HepG2 (cell line): ENCODE measurements at regions of chr16 and their contacts with region 1.

Region 1: GRCh38 chr16:30557957-30558788 is at the start of gene ZNF764:
- DNase-seq: peak; percentile 99
- ATAC-seq: peak; percentile 95
- H3K4me3 ChIP-seq: peak within 1 kb of the TSS; percentile 73 to 82 (median 82)
- H3K27ac ChIP-seq: peak within 1 kb of the TSS; percentile 95
- H3K4me1 ChIP-seq: peaks cover 40% of the 10 kb centered on the region
- H3K27me3 ChIP-seq: no peaks in the 10 kb centered on the region
- CTCF ChIP-seq: no peak; the same call in none of the 2 replicates
- EP300 ChIP-seq: peak in 1 of 2 experiments; percentile 38; a peak in 2 of 4 replicates
- POLR2A ChIP-seq: peak; percentile 80 to 90
- RAD21 ChIP-seq: peak; percentile 47
- total RNA-seq, gene ZNF764: 7.3 and 9.1 TPM in 2 replicates

Region 2: DNA sequence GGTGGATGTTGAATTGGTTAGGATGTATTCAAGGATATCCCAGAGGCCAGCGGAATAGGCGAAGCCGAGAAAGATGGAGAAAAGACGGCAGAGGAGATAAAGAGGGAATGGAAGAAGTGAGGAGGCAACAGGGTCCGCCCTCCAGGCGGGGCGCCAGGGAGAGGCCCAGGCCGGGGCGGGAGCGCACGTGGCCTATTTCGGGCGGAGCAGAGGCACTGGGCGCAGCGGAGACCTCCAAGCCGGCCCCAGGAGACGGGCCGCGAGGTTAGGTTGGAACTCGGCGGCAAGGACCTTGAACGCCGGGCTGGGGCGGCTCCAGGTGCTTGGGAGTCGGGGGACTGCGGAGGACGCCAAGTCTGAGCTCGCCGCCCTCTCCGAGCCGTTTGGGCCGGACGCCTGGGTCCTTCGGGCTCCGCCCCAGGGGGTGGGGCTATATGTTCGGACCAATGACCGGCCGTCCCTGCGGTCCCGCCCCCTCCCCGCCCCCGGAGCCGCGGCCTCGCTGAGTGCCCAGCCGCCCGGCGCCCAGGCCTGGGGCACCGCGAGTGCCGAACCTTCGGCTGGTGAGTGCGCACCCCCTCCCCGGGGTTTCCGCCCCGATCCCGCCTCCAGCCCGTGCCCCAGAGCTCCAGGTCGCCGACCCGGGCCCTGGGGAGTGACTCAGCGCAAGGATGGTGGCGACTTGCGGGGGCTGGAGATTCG is 150.9 kb before region 1 on chr16 and contains the start of gene ZNF771:
- CTCF ChIA-PET with region 1: no interaction called
- POLR2A ChIA-PET with region 1: interaction called, 11 read pairs
- in situ Hi-C with region 1: no loop called
- intact Hi-C with region 1: no loop called
- DNase-seq: peak; percentile 84
- ATAC-seq: peak; percentile 88
- H3K4me3 ChIP-seq: peak within 1 kb of the TSS; percentile 87 to 96 (median 91)
- H3K27ac ChIP-seq: peak within 1 kb of the TSS; percentile 85
- H3K4me1 ChIP-seq: peaks cover 39% of the 10 kb centered on the region
- H3K27me3 ChIP-seq: no peaks in the 10 kb centered on the region
- CTCF ChIP-seq: peak; percentile 54
- EP300 ChIP-seq: no peak
- POLR2A ChIP-seq: peak; percentile 91 to 92
- RAD21 ChIP-seq: peak; percentile 75
- total RNA-seq, gene ZNF771: 10.9 and 11.8 TPM in 2 replicates

Region 3: DNA sequence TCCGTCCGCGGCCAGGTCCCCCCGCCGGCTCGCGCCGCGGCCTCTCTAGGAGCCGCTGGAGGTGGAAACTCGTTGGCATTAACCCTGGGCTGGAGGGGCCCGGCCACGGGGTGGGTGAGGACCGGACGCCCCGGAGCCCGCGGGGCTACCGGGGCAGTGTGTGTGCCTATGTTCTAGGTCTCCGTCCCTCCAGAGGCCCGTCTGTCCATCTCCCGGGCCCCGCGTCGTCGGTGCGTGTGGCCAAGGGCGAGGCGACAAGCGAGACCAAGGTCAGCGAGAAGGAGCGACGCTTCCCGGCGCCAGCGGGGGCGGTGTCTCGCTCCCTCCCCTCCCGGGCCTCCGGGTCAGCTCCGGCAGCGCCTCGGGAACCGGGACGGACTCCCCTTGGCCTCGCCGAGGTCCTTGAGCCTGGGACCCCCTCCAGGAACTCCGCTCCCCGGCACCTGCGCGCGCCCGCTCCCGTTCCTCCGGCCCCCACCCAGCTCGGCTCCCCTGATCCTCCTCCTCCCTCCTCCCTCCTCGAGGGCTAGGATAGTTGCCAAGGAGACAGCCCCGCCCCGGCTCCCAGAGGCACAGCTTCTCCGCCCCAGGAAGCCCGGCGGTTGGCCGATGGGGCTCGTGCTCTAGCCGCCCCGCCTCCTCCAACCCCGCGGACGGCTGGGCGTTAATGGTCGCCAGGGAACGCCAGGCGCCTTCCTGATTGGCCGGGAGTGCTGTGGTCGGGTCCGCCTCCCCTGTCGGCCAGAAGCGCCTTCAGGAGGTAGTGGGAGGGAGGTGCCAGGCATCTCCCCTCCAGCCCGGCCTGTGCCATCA is 31.1 kb before region 1 on chr16:
- CTCF ChIA-PET with region 1: no interaction called
- POLR2A ChIA-PET with region 1: interaction called, 28 read pairs
- in situ Hi-C with region 1: no loop called
- intact Hi-C with region 1: loop called (anchors 2 kb)
- DNase-seq: peak; percentile 97
- ATAC-seq: peak; percentile 89
- H3K4me3 ChIP-seq: peak overlapping the region; percentile 78 to 97 (median 87)
- H3K27ac ChIP-seq: peak overlapping the region; percentile 98
- H3K4me1 ChIP-seq: peaks cover 61% of the 10 kb centered on the region
- H3K27me3 ChIP-seq: no peaks in the 10 kb centered on the region; a peak in 1 of 5 replicates
- CTCF ChIP-seq: peak; percentile 54
- EP300 ChIP-seq: peak in 1 of 2 experiments; percentile 31; a peak in 1 of 4 replicates
- POLR2A ChIP-seq: peak; percentile 70 to 76
- RAD21 ChIP-seq: peak; percentile 75

Region 4: DNA sequence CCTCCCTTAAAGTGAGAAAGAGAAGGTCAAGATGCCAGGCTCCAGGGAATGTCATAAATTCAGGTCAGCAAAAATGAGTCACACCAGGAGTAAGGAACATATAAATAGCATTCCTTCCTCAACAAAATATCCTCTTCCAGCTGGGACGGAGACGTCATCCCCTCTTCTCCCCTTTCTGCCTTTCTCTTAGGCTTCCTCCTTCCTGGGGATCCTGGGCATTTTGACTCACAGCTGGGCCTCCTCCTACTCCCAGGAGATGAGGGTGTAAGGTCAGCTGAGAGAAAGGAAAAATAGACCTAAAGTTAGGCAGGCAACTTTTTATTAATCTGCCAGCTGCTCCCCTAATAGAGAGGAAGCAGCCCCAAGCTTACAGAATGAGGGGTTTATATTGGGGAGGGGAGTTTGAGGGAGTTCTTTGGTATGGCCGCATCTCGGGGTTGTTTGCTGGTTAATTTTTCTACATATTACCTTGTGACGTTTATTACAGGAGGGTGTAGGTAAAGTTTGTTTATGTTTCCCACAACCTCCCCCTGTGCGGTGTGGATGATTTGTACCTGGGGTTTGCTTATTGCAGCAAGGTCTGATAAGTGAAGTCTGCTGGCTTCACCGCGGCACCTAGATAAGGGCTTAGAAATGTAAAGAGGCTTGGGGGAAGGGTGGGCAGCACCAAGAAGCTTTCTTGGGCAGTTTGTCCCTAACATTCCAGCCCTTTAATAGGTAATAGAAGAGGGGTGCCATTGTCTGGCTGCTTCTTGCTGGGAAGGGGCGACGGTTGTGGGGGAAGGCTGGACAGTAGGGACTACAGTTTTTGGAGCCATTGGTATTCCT is 16.5 kb before region 1 on chr16:
- CTCF ChIA-PET with region 1: no interaction called
- POLR2A ChIA-PET with region 1: interaction called, 187 read pairs
- in situ Hi-C with region 1: no loop called
- intact Hi-C with region 1: no loop called
- DNase-seq: peak; percentile 47
- ATAC-seq: peak; percentile 43
- H3K4me3 ChIP-seq: peak overlapping the region; percentile 48 to 63 (median 58)
- H3K27ac ChIP-seq: peak overlapping the region; percentile 62
- H3K4me1 ChIP-seq: peaks cover 72% of the 10 kb centered on the region
- H3K27me3 ChIP-seq: no peaks in the 10 kb centered on the region
- CTCF ChIP-seq: no peak
- EP300 ChIP-seq: no peak; a peak in 1 of 4 replicates
- POLR2A ChIP-seq: 0 out of 4 replicates have a peak, but pooled peaks of 1 of the 2 experiments have one; percentile 15
- RAD21 ChIP-seq: no peak

Region 5: DNA sequence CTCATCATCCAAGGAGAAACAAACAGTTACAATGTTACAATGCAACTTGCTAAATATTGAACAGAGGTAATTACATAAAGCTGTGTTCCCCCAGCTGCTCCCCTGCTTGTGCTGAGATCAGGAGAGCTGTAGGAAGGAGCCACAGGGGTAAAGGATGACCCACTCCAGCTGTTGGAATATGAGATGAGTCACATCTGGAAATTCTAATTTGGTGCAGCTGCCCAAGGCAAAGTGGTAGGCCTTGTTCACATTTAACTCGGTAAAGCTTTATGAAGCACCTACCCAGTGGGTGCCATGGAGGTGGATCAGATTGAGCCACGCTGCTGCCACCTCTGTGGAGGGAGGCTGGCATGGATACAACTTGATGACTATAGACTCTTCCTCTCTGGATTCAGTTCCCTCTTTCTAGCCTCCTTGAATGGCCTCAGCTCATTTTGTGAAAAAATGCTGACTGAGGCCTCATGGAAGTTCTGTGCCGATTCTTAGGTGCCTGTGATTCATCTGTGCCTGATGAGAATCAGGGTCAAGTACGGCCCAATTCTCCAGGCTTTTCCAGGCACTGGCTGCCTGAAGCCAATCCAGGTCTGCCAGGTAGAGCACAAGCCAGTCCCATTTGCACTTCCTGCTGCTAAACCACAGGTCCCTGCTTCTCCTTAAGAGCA is 44.6 kb after region 1 on chr16:
- CTCF ChIA-PET with region 1: interaction called, 4 read pairs
- POLR2A ChIA-PET with region 1: interaction called, 7 read pairs
- in situ Hi-C with region 1: no loop called
- intact Hi-C with region 1: loop called (anchors 5 kb)
- DNase-seq: no peak
- ATAC-seq: no peak
- H3K4me3 ChIP-seq: no peak overlapping the region
- H3K27ac ChIP-seq: no peak overlapping the region
- H3K4me1 ChIP-seq: peaks cover 27% of the 10 kb centered on the region
- H3K27me3 ChIP-seq: no peaks in the 10 kb centered on the region
- CTCF ChIP-seq: no peak
- EP300 ChIP-seq: no peak
- POLR2A ChIP-seq: 0 out of 4 replicates have a peak, but pooled peaks of 1 of the 2 experiments have one; percentile 29
- RAD21 ChIP-seq: no peak

Region 6: DNA sequence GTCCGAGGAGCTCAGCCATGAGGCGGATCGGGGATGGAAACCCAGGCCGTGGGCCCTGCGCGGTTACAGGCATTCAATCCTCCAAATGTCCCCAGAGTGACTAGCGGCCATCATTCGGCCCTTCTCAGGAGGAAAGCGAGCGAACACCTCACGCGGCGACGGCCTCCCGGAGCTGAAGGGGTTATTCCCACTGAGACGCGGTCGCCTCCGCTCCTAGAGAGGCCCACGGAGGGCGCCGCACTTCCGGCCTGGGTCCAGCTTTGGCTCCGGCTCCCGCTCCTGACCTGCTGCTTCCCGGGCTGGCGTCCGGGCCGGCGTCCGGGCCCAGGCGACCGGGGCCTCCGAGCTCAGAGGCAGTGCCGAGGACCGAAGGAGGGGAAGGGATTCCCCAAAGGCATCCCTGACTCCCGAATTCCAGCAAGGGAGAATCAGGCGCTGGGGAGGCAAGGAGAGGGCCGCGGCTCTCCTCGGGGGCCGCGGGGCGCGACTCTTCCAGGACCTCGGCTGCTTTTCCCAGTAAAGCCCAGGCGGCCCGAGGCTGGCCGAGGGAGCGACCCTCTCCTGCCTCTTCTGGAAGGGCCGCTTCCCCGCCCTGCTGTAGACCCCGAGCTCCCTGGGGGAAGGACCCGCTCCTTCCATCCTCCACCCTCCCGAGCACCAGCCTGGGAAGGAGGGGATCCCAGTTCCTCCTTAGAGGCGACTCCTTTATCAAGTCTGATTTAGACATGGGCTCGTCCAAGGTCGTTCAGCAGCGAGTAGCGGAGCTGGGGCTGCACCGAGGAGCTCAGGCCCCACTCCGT is 247.4 kb after region 1 on chr16:
- CTCF ChIA-PET with region 1: no interaction called
- POLR2A ChIA-PET with region 1: no interaction called
- in situ Hi-C with region 1: no loop called
- intact Hi-C with region 1: no loop called
- DNase-seq: peak; percentile 78
- ATAC-seq: peak; percentile 88
- H3K4me3 ChIP-seq: peak overlapping the region; percentile 74 to 96 (median 89)
- H3K27ac ChIP-seq: peak overlapping the region; percentile 92
- H3K4me1 ChIP-seq: peaks cover 54% of the 10 kb centered on the region
- H3K27me3 ChIP-seq: no peaks in the 10 kb centered on the region; a peak in 1 of 5 replicates
- CTCF ChIP-seq: peak; percentile 65
- EP300 ChIP-seq: peak; percentile 68 to 78; a peak in 3 of 4 replicates
- POLR2A ChIP-seq: peak; percentile 91 to 93
- RAD21 ChIP-seq: peak; percentile 83; the same call in 1 of the 2 replicates